GM18951 (cell line): ENCODE measurements at regions of chr1 and their contacts with region 1.

Region 1: GRCh38 chr1:75203415-75204277 is 69.5 kb downstream of the LHX8 start:
- POLR2A ChIP-seq: no peak

Region 2: GRCh38 chr1:74780594-74780993 is 423.1 kb before region 1 on chr1:
- in situ Hi-C with region 1: loop called (anchors 10 kb)
- POLR2A ChIP-seq: no peak

Region 3: DNA sequence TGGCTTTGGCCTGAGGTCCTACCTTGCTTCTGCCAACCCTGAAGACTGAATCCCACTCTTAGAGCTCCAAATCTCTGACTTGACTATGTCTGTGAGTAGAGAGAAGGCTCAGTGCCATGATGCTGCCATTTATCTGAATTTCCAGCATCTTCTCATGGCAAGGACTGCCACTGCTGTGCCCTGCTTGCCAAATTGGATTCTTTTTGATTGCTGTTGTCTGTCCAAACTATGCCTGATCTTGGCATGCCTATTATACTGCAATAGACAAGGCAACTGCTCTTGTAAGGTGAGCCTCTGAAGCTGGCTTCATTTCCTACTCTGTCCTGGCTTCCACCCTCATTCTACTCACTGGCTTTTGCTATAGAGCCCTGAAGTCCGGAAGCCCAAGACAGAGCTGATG is 197.1 kb after region 1 on chr1:
- in situ Hi-C with region 1: no loop called
- POLR2A ChIP-seq: no peak

Region 4: GRCh38 chr1:76279101-76279748 is 1075.6 kb after region 1 on chr1:
- in situ Hi-C with region 1: no loop called
- POLR2A ChIP-seq: no peak